HCT116 (cell line): ENCODE measurements at regions of chr6 and their contacts with region 1.

Region 1: DNA sequence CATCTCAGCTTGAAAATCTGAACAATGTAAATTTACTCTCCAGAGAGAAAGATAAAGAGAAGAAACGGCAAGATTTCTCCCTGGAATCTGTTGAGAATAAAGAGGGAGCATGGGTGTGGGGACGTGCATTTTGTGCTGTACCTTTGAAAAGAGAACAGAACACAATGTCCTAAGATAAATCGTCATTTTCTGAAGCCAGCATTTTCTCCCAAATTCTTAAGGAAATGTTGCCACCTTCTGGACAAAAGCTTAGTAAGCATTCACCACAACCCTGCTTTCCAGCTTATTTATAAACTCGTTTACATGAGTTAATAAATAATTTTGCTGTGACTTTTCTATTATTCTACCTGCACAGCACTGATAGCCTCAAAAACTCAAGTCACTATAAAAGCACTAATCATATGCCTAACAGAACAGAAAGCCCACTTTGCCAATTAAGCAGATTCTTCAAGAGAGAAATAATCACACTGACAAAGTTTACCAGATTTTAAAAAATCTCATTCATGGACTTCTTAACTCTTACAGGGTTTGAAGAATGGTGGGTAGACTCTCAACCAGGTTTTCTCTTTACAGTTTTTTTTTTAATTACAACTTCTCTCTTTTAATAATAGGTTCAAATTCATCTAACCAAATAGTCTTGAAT is 155.8 kb downstream of the MBOAT1 start:
- DNase-seq: peak; percentile 52
- ATAC-seq: peak; percentile 54; the same call in 1 of the 2 replicates
- H3K4me3 ChIP-seq: no peak overlapping the region
- H3K27ac ChIP-seq: no peak overlapping the region
- H3K4me1 ChIP-seq: no peaks in the 10 kb centered on the region
- H3K27me3 ChIP-seq: no peaks in the 10 kb centered on the region
- CTCF ChIP-seq: peak; percentile 48 to 74 (median 69)
- POLR2A ChIP-seq: no peak
- RAD21 ChIP-seq: peak; percentile 86

Region 2: GRCh38 chr6:18527836-18528743 is 1528.4 kb before region 1 on chr6:
- CTCF ChIA-PET with region 1: interaction called, 12 read pairs
- POLR2A ChIA-PET with region 1: no interaction called
- RAD21 ChIA-PET with region 1: no interaction called
- intact Hi-C with region 1: loop called (anchors 1 kb)
- DNase-seq: no peak
- ATAC-seq: peak; percentile 63
- H3K4me3 ChIP-seq: no peak overlapping the region
- H3K27ac ChIP-seq: no peak overlapping the region
- H3K4me1 ChIP-seq: no peaks in the 10 kb centered on the region
- H3K27me3 ChIP-seq: no peaks in the 10 kb centered on the region
- CTCF ChIP-seq: peak; percentile 8 to 66 (median 32); a peak in 3 of 6 replicates
- POLR2A ChIP-seq: no peak
- RAD21 ChIP-seq: peak; percentile 69

Region 3: DNA sequence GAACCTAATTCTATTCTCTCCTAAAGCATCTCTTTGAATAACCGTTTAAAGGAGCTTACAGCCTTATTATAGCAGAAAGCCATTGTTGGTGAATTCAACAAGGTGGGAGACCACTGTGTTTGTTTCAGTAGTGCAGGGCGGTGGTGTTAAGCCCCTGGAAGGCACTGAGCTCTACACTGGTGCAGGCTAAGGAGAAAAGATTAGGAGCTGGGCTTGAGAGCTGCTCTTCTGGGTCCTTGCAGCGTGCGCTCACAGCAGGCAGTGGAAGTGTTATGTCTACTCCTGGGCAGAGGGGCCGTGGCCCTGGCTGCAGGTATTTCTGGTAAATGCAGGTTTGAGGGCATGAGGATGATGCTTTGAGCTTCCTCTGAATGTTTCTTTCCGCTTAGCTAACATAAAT is 1308.2 kb before region 1 on chr6:
- CTCF ChIA-PET with region 1: interaction called, 5 read pairs
- POLR2A ChIA-PET with region 1: no interaction called
- RAD21 ChIA-PET with region 1: no interaction called
- intact Hi-C with region 1: loop called (anchors 5 kb)
- DNase-seq: no peak
- ATAC-seq: no peak
- H3K4me3 ChIP-seq: no peak overlapping the region
- H3K27ac ChIP-seq: no peak overlapping the region
- H3K4me1 ChIP-seq: no peaks in the 10 kb centered on the region
- H3K27me3 ChIP-seq: peaks cover 3% of the 10 kb centered on the region; the same call in 1 of the 2 replicates
- CTCF ChIP-seq: no peak
- POLR2A ChIP-seq: no peak
- RAD21 ChIP-seq: no peak

Region 4: GRCh38 chr6:18997375-18997826 is 1059.1 kb before region 1 on chr6:
- CTCF ChIA-PET with region 1: interaction called, 15 read pairs
- POLR2A ChIA-PET with region 1: no interaction called
- RAD21 ChIA-PET with region 1: interaction called in 1 of 2 experiments, 6 read pairs
- intact Hi-C with region 1: loop called (anchors 10 kb)
- DNase-seq: peak; percentile 52
- ATAC-seq: peak; percentile 100
- H3K4me3 ChIP-seq: no peak overlapping the region
- H3K27ac ChIP-seq: no peak overlapping the region
- H3K4me1 ChIP-seq: no peaks in the 10 kb centered on the region
- H3K27me3 ChIP-seq: no peaks in the 10 kb centered on the region
- CTCF ChIP-seq: peak; percentile 45 to 68 (median 67); a peak in 5 of 6 replicates
- POLR2A ChIP-seq: no peak
- RAD21 ChIP-seq: peak; percentile 59

Region 5: DNA sequence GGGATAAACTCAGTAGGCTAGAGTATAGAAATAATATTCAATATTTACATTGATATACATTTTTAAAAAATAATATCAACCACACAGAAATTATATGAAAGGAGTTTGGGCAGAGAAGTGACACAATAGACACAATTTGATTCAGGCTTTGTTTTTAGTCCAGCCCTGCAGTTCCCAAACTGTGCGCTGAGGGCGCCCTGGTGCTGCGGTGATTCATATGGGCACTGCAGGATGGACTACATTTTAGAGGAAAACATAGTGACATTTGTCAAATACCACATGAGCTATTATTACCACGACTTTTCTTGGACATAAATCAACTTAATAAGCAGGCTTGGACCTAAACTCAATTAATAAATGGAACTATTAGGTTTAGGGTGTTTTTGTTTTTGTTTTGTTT is 583.6 kb before region 1 on chr6:
- CTCF ChIA-PET with region 1: no interaction called
- POLR2A ChIA-PET with region 1: no interaction called
- RAD21 ChIA-PET with region 1: no interaction called
- intact Hi-C with region 1: loop called (anchors 10 kb)
- DNase-seq: no peak
- ATAC-seq: peak; percentile 77; the same call in 1 of the 2 replicates
- H3K4me3 ChIP-seq: no peak overlapping the region
- H3K27ac ChIP-seq: no peak overlapping the region
- H3K4me1 ChIP-seq: peaks cover 7 to 9% of the 10 kb centered on the region in 2 experiments; a peak in 3 of 4 replicates
- H3K27me3 ChIP-seq: no peaks in the 10 kb centered on the region
- CTCF ChIP-seq: peak; percentile 38 to 85 (median 75); a peak in 5 of 6 replicates
- POLR2A ChIP-seq: no peak
- RAD21 ChIP-seq: peak; percentile 62

Region 6: GRCh38 chr6:20661721-20662120 is 605.2 kb after region 1 on chr6:
- CTCF ChIA-PET with region 1: no interaction called
- POLR2A ChIA-PET with region 1: no interaction called
- RAD21 ChIA-PET with region 1: no interaction called
- intact Hi-C with region 1: no loop called
- DNase-seq: no peak
- ATAC-seq: no peak
- H3K4me3 ChIP-seq: no peak overlapping the region
- H3K27ac ChIP-seq: no peak overlapping the region
- H3K4me1 ChIP-seq: no peaks in the 10 kb centered on the region; a peak in 1 of 4 replicates
- H3K27me3 ChIP-seq: no peaks in the 10 kb centered on the region
- CTCF ChIP-seq: no peak
- POLR2A ChIP-seq: no peak
- RAD21 ChIP-seq: no peak